GM12878 (cell line): ENCODE measurements at regions of chr16 and their contacts with region 1.

Region 1: DNA sequence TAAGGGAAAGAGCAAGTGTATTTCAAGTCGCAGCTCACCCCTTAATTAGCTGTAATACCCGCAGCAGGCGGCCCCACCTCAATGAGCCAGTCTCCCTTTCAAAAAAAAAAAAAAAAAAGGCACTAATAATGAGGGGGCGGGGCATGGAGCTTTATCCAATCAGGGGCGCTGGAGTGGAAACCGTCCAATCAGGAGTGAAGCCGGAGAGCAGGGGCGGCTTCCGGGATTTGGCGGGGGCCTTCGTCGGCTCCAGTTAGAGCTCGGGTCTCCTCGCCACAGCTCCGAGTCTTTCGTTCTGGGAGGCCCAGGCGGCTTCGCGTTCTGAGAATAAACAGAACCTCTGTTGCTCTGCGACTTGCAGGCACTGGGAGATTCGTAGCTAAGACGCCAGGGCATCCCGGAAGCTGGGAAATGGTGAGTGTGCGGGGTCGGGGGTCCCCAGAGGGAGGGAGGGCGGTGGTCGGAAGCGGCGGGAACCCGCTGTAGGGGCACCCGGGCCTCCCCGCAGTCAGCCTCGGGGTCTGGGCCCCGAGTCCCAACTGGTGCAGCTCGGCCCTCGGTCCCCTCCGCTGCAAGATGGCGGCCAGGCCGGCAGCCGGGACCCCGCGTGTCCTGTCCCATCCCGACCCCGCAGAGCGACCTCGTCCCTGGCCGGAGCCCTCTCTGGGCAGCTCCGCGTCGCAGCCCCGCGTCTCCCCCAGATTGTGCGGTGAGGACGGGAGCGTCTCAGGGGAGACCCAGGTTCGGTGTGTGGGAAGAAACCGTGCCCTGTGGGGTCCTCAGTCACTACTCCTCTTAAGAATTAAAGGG is at the start of gene ZNF267:
- DNase-seq: peak; percentile 50
- ATAC-seq: peak; percentile 73
- H3K4me3 ChIP-seq: peak within 1 kb of the TSS; percentile 94
- H3K27ac ChIP-seq: peak within 1 kb of the TSS; percentile 99
- H3K4me1 ChIP-seq: peaks cover 35% of the 10 kb centered on the region
- H3K27me3 ChIP-seq: no peaks in the 10 kb centered on the region
- CTCF ChIP-seq: no peak
- EP300 ChIP-seq: no peak
- POLR2A ChIP-seq: peak; percentile 89
- RAD21 ChIP-seq: no peak
- polyA plus RNA-seq, gene ZNF267: 16.3 to 18.9 TPM

Region 2: DNA sequence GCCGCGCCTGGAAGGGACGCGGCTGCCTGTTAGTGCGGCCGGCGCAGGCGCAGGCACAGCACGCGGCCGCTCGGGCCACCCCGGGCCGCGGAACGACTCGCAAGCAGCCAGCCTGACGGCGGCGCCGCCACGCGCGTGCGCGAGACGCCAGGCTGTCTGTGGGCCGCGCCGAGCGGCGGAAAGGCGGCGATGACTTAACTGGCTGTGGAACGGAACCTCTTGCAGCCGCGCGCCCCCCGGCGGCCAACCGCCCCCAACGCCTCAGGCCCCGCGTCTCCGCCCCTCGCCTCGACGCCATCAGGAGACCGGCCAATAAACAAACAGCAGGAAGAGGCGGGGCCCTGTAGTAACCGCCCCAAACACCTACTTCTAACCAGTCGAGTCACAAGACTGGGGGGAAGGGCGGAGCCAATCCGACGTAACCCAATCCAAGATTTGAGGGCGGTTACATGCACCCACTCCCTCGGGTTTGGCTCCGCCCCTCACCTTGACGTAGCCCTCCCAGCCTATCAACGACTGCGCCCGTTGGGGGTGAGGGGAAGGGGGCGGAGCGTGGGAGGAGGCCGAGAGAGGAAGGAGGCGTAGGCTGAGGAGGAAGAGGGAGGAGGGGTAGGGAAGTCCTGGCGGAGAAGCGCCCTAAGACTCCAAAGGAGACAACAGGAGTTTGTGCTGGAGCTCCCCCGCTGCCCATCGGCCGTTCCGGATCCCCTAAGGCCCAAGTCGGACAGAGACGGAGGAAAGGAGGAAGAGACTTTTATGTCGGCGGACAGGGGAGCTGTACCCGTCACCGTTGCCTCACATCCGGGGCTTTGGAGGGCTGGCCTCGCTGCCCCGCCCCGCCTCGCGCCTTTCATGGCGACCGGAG is 1215.7 kb before region 1 on chr16 and contains the start of gene FBRS:
- CTCF ChIA-PET with region 1: no interaction called
- POLR2A ChIA-PET with region 1: no interaction called
- RAD21 ChIA-PET with region 1: no interaction called
- SMC1A ChIA-PET with region 1: no interaction called
- in situ Hi-C with region 1: loop called (anchors 25 kb)
- intact Hi-C with region 1: no loop called
- DNase-seq: peak; percentile 99
- ATAC-seq: peak; percentile 81
- H3K4me3 ChIP-seq: peak within 1 kb of the TSS; percentile 89
- H3K27ac ChIP-seq: peak within 1 kb of the TSS; percentile 98
- H3K4me1 ChIP-seq: peaks cover 22% of the 10 kb centered on the region
- H3K27me3 ChIP-seq: no peaks in the 10 kb centered on the region
- CTCF ChIP-seq: peak; percentile 72 to 99 (median 75); a peak in 5 of 6 replicates
- EP300 ChIP-seq: no peak
- POLR2A ChIP-seq: peak; percentile 84
- RAD21 ChIP-seq: peak; percentile 35; the same call in 1 of the 2 replicates
- polyA plus RNA-seq, gene FBRS: 0.45 to 0.95 TPM

Region 3: GRCh38 chr16:31117391-31118197 is 756.2 kb before region 1 on chr16 and contains the start of gene KAT8:
- CTCF ChIA-PET with region 1: no interaction called
- POLR2A ChIA-PET with region 1: interaction called, 3 read pairs
- RAD21 ChIA-PET with region 1: no interaction called
- SMC1A ChIA-PET with region 1: no interaction called
- in situ Hi-C with region 1: loop called (anchors 10 kb)
- intact Hi-C with region 1: loop called (anchors 10 kb)
- DNase-seq: peak; percentile 72
- ATAC-seq: peak; percentile 96
- H3K4me3 ChIP-seq: peak within 1 kb of the TSS; percentile 84
- H3K27ac ChIP-seq: peak within 1 kb of the TSS; percentile 73
- H3K4me1 ChIP-seq: peaks cover 8% of the 10 kb centered on the region
- H3K27me3 ChIP-seq: no peaks in the 10 kb centered on the region
- CTCF ChIP-seq: no peak
- EP300 ChIP-seq: no peak
- POLR2A ChIP-seq: peak; percentile 96
- RAD21 ChIP-seq: no peak
- polyA plus RNA-seq, gene KAT8: 5.5 to 11.2 TPM

Region 4: DNA sequence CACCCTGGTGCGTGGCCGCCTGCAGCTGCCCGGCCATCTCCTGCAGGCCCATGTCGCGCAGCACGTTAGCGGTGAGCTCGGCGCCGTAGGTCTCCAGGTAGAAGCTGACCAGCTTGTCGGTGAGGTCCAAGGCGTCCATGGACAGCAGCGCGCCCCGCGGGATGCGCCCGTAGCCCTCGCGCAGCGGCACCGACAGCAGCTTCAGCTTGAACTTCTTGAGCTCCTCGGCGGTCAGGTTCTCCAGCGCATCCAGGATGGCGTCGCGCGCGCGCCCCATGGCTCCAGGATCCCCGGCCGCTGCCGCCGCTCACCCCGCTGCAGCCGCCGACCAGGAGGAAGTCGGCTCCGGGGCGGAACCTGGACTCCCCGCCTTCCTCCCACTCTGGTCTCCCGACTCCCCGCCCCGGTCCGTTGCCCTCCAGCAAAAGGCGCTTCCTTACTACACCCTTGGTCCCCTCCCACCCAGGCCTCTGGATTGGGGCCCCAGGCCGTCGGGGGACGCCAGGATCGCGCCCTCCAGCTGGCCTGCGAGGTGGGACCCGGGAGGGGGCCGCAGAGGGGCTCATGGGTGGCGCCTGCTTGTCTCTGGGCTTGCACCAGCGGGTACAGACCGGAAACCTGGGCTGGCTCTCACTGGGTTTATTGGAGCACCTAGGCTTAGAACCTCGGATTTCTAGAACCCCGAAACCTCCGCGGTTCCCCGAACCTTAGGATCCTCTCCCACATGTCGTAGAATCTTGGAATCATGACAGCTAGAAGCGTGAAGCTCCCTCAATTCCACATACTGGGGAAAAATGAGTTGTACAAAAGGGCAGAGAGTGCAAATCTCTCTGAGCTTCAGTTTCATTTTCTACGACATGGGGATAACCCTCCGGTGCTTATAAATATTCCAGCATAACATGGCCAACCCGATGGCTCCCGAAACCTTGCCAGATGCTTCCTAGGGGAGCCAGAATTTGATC is 671.1 kb before region 1 on chr16 and contains the start of gene PYCARD:
- CTCF ChIA-PET with region 1: no interaction called
- POLR2A ChIA-PET with region 1: no interaction called
- RAD21 ChIA-PET with region 1: no interaction called
- SMC1A ChIA-PET with region 1: no interaction called
- in situ Hi-C with region 1: loop called (anchors 10 kb)
- intact Hi-C with region 1: no loop called
- DNase-seq: no peak
- ATAC-seq: peak; percentile 51
- H3K4me3 ChIP-seq: peak within 1 kb of the TSS; percentile 86
- H3K27ac ChIP-seq: peak within 1 kb of the TSS; percentile 76
- H3K4me1 ChIP-seq: peaks cover 24% of the 10 kb centered on the region
- H3K27me3 ChIP-seq: no peaks in the 10 kb centered on the region
- CTCF ChIP-seq: no peak
- EP300 ChIP-seq: no peak
- POLR2A ChIP-seq: peak; percentile 76
- RAD21 ChIP-seq: no peak
- polyA plus RNA-seq, gene PYCARD: 5.1 to 14.9 TPM

Region 5: GRCh38 chr16:31458844-31459721 is 414.7 kb before region 1 on chr16 and contains the start of gene ARMC5:
- CTCF ChIA-PET with region 1: interaction called, 47 read pairs
- POLR2A ChIA-PET with region 1: interaction called, 20 read pairs
- RAD21 ChIA-PET with region 1: interaction called, 20 read pairs
- SMC1A ChIA-PET with region 1: interaction called, 26 read pairs
- in situ Hi-C with region 1: loop called (anchors 5 kb)
- intact Hi-C with region 1: loop called (anchors 1 kb)
- DNase-seq: peak; percentile 90
- ATAC-seq: peak; percentile 80
- H3K4me3 ChIP-seq: peak within 1 kb of the TSS; percentile 95
- H3K27ac ChIP-seq: peak within 1 kb of the TSS; percentile 100
- H3K4me1 ChIP-seq: peaks cover 16% of the 10 kb centered on the region
- H3K27me3 ChIP-seq: no peaks in the 10 kb centered on the region
- CTCF ChIP-seq: peak; percentile 48 to 71 (median 67)
- EP300 ChIP-seq: 0 out of 4 replicates have a peak, but pooled peaks of 1 of the 2 experiments have one; percentile 9
- POLR2A ChIP-seq: peak; percentile 95
- RAD21 ChIP-seq: 0 out of 2 replicates have a peak, but pooled peaks have one; percentile 13
- polyA plus RNA-seq, gene ARMC5: 0.06 to 0.51 TPM

Region 6: GRCh38 chr16:31861455-31861854 is 12.3 kb before region 1 on chr16:
- CTCF ChIA-PET with region 1: interaction called, 92 read pairs
- POLR2A ChIA-PET with region 1: no interaction called
- RAD21 ChIA-PET with region 1: interaction called, 9 read pairs
- SMC1A ChIA-PET with region 1: interaction called, 37 read pairs
- in situ Hi-C with region 1: no loop called
- intact Hi-C with region 1: no loop called
- DNase-seq: no peak
- ATAC-seq: no peak
- H3K4me3 ChIP-seq: no peak overlapping the region
- H3K27ac ChIP-seq: no peak overlapping the region
- H3K4me1 ChIP-seq: no peaks in the 10 kb centered on the region
- H3K27me3 ChIP-seq: peaks cover 0 to 7% of the 10 kb centered on the region in 2 experiments; a peak in 1 of 4 replicates
- CTCF ChIP-seq: no peak
- EP300 ChIP-seq: no peak
- POLR2A ChIP-seq: no peak
- RAD21 ChIP-seq: no peak